PC-3 (cell line): ENCODE measurements at regions of chr7 and their contacts with region 1.

Region 1: DNA sequence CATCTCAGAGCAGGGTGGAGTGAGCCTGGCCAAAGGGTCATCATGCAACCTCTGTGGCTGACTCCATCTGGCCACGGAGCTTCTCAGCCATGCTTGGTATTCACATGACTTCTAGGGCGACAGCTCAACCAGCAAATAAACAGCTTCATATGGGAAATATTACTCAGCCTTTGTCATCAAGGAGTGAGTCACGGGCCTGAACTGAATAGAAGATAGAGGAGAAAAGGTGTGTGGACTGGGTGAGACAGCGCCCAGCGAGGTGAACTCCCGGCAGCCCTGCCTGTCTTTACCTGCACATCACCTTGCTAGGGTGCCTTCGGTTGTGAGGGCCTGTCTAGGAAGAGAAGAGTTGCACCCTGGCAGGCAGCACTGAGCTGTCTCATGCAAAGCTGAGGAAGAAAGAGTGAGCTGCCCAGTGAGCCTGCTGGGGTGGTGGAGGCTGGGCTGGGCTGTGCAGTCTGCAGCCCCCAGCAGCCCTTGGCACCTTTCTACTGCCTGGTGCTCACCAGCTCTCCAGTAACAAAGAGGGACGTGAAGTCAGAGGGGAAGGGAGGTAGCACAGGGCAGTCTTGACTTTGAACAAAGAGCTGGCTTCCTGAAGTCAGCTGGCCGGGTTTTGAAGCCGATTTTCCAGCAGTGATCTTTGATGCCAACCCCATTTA is 114.2 kb downstream of the EGFR start:
- DNase-seq: peak; percentile 98
- ATAC-seq: peak; percentile 76
- H3K4me3 ChIP-seq: peak overlapping the region; percentile 26; the same call in 1 of the 2 replicates
- H3K27ac ChIP-seq: peak overlapping the region; percentile 99
- H3K4me1 ChIP-seq: peaks cover 79% of the 10 kb centered on the region
- H3K27me3 ChIP-seq: no peaks in the 10 kb centered on the region
- CTCF ChIP-seq: no peak

Region 2: DNA sequence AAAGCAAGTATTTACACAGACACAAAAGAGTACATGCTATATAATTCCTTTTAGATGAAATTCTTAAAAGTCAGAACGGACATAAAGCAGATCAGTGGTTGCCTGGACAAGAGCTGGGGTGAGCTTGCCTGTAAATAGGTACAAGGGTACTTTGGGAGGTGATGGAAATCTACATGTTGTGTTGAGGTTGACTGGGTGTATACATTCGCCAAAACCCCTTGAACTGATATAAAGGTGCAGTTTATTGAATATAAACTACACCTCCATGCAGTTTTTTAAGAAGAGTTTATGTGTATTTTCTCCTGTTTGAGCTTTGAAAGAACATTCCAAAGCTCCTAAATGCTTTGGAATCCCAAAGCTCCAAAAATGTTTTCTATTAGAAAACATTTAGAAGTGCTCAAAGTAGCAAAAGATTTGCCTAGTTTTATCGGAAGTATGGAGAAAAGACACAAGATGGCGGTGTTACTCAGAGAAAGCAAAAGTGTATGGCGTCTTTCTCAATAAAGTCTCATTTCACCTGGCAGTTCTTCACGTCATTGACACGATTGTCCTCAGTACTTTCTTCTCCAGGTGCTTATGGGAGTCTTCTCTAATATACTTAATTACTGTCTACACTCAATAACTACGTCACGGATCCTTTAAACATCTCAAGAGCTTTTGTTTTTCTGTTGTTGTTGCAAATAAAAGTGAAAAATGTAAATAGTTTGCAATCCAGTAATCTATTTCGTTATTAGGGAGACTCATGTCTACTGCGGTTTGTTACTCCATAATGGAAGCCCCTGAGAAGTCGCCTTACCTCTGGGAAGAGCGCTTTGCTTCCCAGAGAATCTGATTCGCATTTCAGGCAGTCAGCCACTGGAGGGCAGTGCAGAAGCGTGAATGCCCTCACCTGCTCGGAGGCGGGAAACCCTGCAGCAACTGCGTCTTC is 359.3 kb before region 1 on chr7:
- CTCF ChIA-PET with region 1: interaction called, 4 read pairs
- POLR2A ChIA-PET with region 1: no interaction called
- intact Hi-C with region 1: loop called (anchors 5 kb)
- DNase-seq: peak; percentile 94
- ATAC-seq: peak; percentile 88
- H3K4me3 ChIP-seq: peak overlapping the region; percentile 67
- H3K27ac ChIP-seq: peak overlapping the region; percentile 54
- H3K4me1 ChIP-seq: peaks cover 21% of the 10 kb centered on the region
- H3K27me3 ChIP-seq: no peaks in the 10 kb centered on the region
- CTCF ChIP-seq: peak; percentile 86

Region 3: GRCh38 chr7:54839538-54840213 is 293.3 kb before region 1 on chr7:
- CTCF ChIA-PET with region 1: interaction called, 3 read pairs
- POLR2A ChIA-PET with region 1: interaction called, 3 read pairs
- intact Hi-C with region 1: loop called (anchors 2 kb)
- DNase-seq: peak; percentile 78
- ATAC-seq: peak; percentile 74
- H3K4me3 ChIP-seq: no peak overlapping the region
- H3K27ac ChIP-seq: peak overlapping the region; percentile 96
- H3K4me1 ChIP-seq: peaks cover 69% of the 10 kb centered on the region
- H3K27me3 ChIP-seq: no peaks in the 10 kb centered on the region
- CTCF ChIP-seq: peak; percentile 90

Region 4: DNA sequence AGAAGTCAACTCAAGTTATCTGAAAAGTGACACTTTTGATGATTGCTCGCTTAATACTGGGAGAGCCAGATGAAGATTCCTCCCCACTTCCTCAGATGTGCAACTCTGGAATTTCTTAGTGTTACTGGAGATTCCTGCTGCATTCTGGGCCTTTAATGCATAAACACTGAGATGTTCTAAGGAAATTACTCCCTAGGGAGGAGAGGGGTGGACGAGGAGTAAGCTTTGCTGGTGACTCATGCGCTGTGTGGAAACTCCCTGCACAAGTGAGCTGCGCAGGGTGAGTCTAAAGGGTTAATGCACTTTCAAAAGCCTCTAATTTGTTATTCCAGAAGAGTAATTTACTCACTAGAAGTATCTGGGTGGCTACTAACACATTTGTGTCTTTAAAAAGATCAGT is 67.9 kb before region 1 on chr7:
- CTCF ChIA-PET with region 1: no interaction called
- POLR2A ChIA-PET with region 1: no interaction called
- intact Hi-C with region 1: loop called (anchors 2 kb)
- DNase-seq: peak; percentile 89
- ATAC-seq: peak; percentile 88
- H3K4me3 ChIP-seq: peak overlapping the region; percentile 46; the same call in 1 of the 2 replicates
- H3K27ac ChIP-seq: peak overlapping the region; percentile 97
- H3K4me1 ChIP-seq: peaks cover 48% of the 10 kb centered on the region
- H3K27me3 ChIP-seq: no peaks in the 10 kb centered on the region
- CTCF ChIP-seq: no peak

Region 5: GRCh38 chr7:55109381-55110167 is 23.4 kb before region 1 on chr7:
- CTCF ChIA-PET with region 1: no interaction called
- POLR2A ChIA-PET with region 1: no interaction called
- intact Hi-C with region 1: loop called (anchors 2 kb)
- DNase-seq: peak; percentile 91
- ATAC-seq: peak; percentile 87
- H3K4me3 ChIP-seq: peak overlapping the region; percentile 28; the same call in 1 of the 2 replicates
- H3K27ac ChIP-seq: peak overlapping the region; percentile 91
- H3K4me1 ChIP-seq: peaks cover 42% of the 10 kb centered on the region
- H3K27me3 ChIP-seq: no peaks in the 10 kb centered on the region
- CTCF ChIP-seq: no peak

Region 6: DNA sequence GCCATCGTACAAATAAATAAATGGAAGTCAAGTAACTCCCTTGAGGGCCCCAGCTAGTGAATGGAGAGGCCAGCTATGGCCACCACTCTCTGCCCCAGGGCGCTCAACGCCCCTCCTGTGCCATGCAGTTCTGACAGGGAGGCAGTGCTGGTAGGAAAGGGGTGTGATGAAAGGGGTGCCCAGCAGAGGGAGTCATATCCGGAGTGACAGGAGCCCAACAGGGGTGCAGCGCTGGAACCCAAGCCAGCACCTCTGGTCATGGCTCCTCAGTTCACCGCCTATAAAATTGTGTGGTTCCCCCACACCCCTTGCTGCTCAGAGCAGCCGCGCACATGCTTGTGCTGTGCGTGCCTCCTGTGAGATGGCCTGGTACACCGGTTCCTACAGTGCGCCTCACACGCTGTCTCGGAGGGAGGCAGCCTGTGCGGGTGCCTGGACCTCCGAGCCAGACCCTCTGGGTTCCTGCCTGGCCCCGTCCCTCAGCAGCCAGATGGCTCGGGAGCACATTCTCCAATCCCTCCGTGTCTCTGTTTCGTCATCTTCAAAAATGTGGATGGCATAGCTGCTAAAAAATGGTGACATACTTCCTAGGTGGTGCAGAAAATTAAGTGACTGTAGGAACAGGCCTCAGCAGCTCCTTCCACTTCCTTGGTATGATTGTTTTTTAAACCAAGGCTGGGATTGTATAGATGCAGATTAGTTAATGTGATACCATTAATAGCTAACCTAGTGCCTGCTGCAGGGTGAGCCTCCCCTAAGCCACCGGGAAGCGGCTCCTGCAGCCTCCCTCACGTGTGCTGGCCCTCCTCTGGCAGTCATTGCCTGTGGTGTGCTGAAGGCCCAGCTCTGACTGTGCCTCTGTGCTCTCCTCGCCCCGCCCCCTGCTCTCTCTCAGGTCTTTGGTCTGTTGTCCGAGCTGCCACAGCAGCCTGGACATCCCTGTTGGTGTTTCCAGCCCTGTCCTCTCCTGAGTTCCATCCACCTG is 11.6 kb after region 1 on chr7:
- CTCF ChIA-PET with region 1: no interaction called
- POLR2A ChIA-PET with region 1: no interaction called
- intact Hi-C with region 1: no loop called
- DNase-seq: no peak
- ATAC-seq: no peak
- H3K4me3 ChIP-seq: no peak overlapping the region
- H3K27ac ChIP-seq: no peak overlapping the region
- H3K4me1 ChIP-seq: no peaks in the 10 kb centered on the region
- H3K27me3 ChIP-seq: no peaks in the 10 kb centered on the region
- CTCF ChIP-seq: peak; percentile 41; the same call in 1 of the 2 replicates

Region 7: DNA sequence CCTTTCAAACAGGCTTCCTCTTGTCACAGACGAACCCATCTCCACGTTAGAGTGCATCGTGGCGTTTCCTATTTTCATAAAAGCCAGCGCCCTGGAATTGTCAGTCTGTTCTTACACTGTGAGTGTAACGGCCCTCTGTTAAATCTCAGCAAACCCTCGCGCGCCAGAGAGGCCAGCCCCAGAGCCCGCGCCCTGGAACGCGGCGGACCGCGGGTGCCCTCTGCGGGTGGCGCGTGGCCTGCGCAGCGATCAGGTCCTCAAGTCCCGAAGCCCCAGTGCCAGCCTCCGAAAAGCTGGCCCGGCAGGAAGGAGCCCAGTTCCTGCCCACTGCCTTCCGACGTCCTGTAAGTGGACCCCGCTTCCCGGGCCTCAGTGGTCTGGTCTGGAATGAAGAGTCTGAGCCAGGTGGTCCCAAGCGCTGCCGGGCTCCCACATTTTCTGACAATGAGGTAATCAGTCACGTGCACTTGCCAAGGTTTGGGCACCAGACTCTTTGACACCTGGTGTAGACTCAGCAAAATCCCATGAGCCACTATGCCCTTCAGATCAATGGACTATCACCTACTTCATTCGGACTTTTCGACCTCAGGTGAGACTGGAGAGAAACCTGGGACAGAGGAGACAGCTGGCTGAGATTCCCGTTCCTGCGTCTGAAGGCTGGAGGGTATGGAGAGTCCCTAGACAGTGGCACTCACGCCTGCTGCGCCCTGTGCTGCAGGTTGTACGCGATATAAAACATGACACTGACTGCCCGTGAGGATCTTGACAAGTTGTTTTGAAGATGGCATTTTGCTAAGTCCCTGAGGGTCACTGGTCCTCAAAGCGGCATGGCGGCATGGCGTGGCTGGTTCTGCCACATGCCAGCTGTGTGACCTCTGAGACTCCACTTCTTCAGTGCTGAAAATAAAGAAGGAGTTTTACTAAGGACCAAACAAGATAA is 122.7 kb after region 1 on chr7:
- CTCF ChIA-PET with region 1: interaction called, 3 read pairs
- POLR2A ChIA-PET with region 1: no interaction called
- intact Hi-C with region 1: loop called (anchors 2 kb)
- DNase-seq: peak; percentile 85
- ATAC-seq: peak; percentile 84
- H3K4me3 ChIP-seq: peak overlapping the region; percentile 72
- H3K27ac ChIP-seq: peak overlapping the region; percentile 47
- H3K4me1 ChIP-seq: peaks cover 9% of the 10 kb centered on the region; the same call in 1 of the 2 replicates
- H3K27me3 ChIP-seq: no peaks in the 10 kb centered on the region
- CTCF ChIP-seq: peak; percentile 90